Activated CD8-positive, alpha-beta T cell treated with anti-CD3 and anti-CD28 coated beads for 36 hours (primary cell): ENCODE measurements at regions of chr6 and their contacts with region 1.

Region 1: DNA sequence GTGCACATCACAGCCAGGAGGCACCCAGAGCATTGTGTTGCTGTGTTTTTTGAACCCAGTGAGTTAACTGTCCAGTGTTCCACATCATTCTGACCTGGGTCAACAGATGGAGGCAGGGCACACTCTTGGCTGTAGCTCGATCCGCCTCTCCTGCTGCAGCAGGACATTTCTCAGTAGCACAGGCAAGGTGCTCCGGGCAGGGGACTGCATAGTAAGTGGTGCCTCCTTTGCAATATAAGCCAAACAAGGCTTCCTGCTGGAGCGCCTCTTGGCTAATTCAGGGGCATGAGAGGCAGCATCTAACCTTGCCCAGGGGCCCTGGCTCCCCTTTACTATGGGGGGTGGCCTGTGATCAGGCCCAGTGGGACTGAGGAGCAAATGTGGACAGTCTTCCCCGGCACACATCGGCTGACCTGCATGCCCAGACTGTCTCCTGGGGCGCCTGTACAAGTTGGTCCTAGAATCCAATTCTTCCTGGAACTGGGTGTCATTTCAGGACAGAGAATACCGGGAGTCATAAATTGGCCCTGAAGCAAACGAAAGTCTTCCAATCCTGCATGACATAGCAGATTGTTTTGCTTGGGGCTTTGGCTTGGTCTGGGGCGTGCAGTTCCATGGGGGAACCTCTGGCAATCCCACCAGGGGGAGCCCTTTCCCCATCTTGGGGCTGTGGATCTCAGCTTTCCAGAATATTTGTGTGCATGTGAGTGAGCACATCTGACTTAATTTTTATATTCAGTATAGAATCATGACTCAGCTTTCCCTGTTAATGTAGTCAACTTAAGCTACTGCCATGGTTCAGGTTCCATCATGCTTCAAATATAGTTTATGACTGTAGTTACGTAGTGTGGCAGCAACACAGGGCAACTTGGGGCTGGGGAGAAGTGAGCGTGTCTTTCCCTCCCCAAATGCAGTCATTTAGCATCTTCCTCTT is 56.0 kb upstream of the DDR1 start:
- DNase-seq: peak; percentile 88
- ATAC-seq: peak; percentile 73
- H3K4me3 Mint-ChIP-seq: peak overlapping the region; percentile 84
- H3K27ac Mint-ChIP-seq: peak overlapping the region; percentile 96
- H3K4me1 Mint-ChIP-seq: peaks cover 66% of the 10 kb centered on the region
- H3K27me3 Mint-ChIP-seq: no peaks in the 10 kb centered on the region
- CTCF ChIP-seq: peak; percentile 86

Region 2: DNA sequence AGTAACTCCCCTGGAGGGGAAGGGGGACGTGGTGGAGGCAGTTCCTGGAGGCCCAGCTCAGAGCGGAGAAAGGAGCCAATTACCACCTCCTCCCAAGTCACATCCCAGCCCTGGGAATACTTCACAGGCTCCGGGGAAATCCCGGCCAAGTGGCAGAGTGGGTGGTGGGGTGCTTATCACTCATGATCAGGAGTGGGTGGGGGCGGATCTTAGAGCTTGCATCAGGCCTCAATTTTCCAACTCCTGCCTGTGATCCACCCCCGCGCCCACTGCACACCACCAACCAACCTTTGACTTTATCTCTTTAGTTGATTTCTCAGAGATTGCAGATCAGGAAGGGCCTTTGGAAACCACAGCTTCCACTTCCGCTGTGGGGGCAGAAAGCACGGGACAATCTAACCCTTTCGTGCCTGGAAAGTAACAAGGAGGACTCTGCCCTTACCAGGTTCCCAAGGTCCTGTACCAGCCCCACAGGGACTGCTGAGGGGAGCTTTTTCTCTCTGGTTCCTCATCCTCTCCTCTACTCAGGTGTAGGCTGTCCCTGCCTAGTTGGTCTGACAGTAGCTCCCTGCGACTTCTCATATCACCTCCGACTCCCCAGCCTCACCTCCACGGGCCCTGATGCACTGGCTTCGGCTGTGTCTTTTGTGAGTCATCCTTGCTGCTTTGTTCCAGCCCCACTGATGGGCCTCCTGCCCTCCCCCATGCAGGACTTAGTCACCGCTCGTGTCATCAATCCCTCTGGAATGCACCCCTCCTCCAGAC is 59.0 kb before region 1 on chr6:
- CTCF ChIA-PET with region 1: interaction called, 7 read pairs
- POLR2A ChIA-PET with region 1: interaction called, 10 read pairs
- intact Hi-C with region 1: no loop called
- DNase-seq: peak; percentile 97
- ATAC-seq: peak; percentile 70
- H3K4me3 Mint-ChIP-seq: peak overlapping the region; percentile 75
- H3K27ac Mint-ChIP-seq: peak overlapping the region; percentile 99
- H3K4me1 Mint-ChIP-seq: peaks cover 82% of the 10 kb centered on the region
- H3K27me3 Mint-ChIP-seq: no peaks in the 10 kb centered on the region
- CTCF ChIP-seq: no peak

Region 3: GRCh38 chr6:30862156-30862875 is 34.0 kb after region 1 on chr6:
- CTCF ChIA-PET with region 1: interaction called, 10 read pairs
- POLR2A ChIA-PET with region 1: interaction called, 4 read pairs
- intact Hi-C with region 1: no loop called
- DNase-seq: no peak
- ATAC-seq: no peak
- H3K4me3 Mint-ChIP-seq: no peak overlapping the region
- H3K27ac Mint-ChIP-seq: no peak overlapping the region
- H3K4me1 Mint-ChIP-seq: peaks cover 11% of the 10 kb centered on the region
- H3K27me3 Mint-ChIP-seq: no peaks in the 10 kb centered on the region
- CTCF ChIP-seq: no peak

Region 4: GRCh38 chr6:30914076-30914853 is 86.0 kb after region 1 on chr6 and contains the start of gene VARS2:
- CTCF ChIA-PET with region 1: interaction called, 49 read pairs
- POLR2A ChIA-PET with region 1: interaction called, 3 read pairs
- intact Hi-C with region 1: no loop called
- DNase-seq: peak; percentile 89
- ATAC-seq: peak; percentile 96
- H3K4me3 Mint-ChIP-seq: peak within 1 kb of the TSS; percentile 80
- H3K27ac Mint-ChIP-seq: peak within 1 kb of the TSS; percentile 88
- H3K4me1 Mint-ChIP-seq: peaks cover 29% of the 10 kb centered on the region
- H3K27me3 Mint-ChIP-seq: no peaks in the 10 kb centered on the region
- CTCF ChIP-seq: no peak
- total RNA-seq, gene VARS2: 83.0 to 84.0 TPM

Region 5: GRCh38 chr6:31087494-31088089 is 259.3 kb after region 1 on chr6:
- CTCF ChIA-PET with region 1: interaction called, 15 read pairs
- POLR2A ChIA-PET with region 1: no interaction called
- intact Hi-C with region 1: no loop called
- DNase-seq: peak; percentile 92
- ATAC-seq: peak; percentile 97
- H3K4me3 Mint-ChIP-seq: no peak overlapping the region
- H3K27ac Mint-ChIP-seq: no peak overlapping the region
- H3K4me1 Mint-ChIP-seq: peaks cover 10% of the 10 kb centered on the region
- H3K27me3 Mint-ChIP-seq: no peaks in the 10 kb centered on the region
- CTCF ChIP-seq: peak; percentile 72